ENCODE measurements at regions of chr6 and their contacts with region 1.

Region 1: GRCh38 chr6:128807577-128807976 is 75.4 kb upstream of the LAMA2 start:
- DNase-seq: no peak
- ATAC-seq: peak in 1 of 4 donors; percentile 35
- H3K4me3 ChIP-seq: no peak overlapping the region
- H3K27ac ChIP-seq: no peak overlapping the region
- H3K4me1 ChIP-seq: no peaks in the 10 kb centered on the region
- H3K27me3 ChIP-seq: no peaks in the 10 kb centered on the region
- CTCF ChIP-seq: peak; percentile 39

Region 2: GRCh38 chr6:128036808-128037570 is 770.6 kb before region 1 on chr6:
- intact Hi-C with region 1: no loop called
- DNase-seq: no peak
- ATAC-seq: no peak
- H3K4me3 ChIP-seq: no peak overlapping the region
- H3K27ac ChIP-seq: no peak overlapping the region
- H3K4me1 ChIP-seq: no peaks in the 10 kb centered on the region
- H3K27me3 ChIP-seq: no peaks in the 10 kb centered on the region
- CTCF ChIP-seq: no peak

Region 3: DNA sequence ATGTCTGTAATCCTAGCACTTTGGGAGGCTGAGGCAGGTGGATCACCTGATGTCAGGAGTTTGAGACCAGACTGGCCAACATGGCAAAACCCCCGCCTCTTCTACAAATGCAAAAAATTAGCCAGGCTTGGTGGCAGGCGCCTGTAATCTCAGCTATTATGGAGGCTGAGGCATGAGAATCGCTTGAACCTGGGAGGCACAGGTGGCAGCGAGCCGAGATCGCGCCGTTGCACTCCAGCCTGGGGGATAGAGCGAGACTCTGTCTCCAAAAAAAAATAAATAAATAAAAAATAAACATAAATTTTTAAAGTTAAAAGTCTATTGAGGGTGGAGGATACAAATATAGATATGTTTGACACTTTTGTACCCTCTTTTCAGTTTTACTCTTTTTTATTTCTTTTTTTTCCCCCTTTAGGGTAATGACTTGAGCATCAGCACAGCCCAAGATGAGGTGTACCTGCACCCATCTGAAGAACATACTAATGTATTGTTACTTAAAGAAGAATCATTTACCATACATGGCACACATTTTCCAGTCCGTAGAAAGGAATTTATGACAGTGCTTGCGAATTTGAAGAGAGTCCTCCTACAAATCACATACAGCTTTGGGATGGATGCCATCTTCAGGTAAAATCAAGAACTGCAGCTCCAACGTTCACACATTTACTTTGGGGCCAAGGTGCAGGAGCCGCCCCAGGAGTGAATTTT is 444.2 kb after region 1 on chr6:
- intact Hi-C with region 1: loop called in 1 of 2 experiments (anchors 2 kb)
- DNase-seq: peak in 1 of 2 donors; percentile 14
- ATAC-seq: peak in 3 of 4 donors; percentile 7 to 79 (median 60)
- H3K4me3 ChIP-seq: no peak overlapping the region
- H3K27ac ChIP-seq: no peak overlapping the region
- H3K4me1 ChIP-seq: no peaks in the 10 kb centered on the region
- H3K27me3 ChIP-seq: no peaks in the 10 kb centered on the region
- CTCF ChIP-seq: peak; percentile 78

Measured in psoas muscle (tissue), 8 donors.